ENCODE measurements at regions of chr22 and their contacts with region 1.

Region 1: GRCh38 chr22:23685205-23685784 is 5.5 kb upstream of the RGL4 start:
- DNase-seq: no peak
- ATAC-seq: no peak
- H3K4me3 Mint-ChIP-seq: no peak overlapping the region
- H3K27ac Mint-ChIP-seq: no peak overlapping the region
- H3K4me1 Mint-ChIP-seq: peaks cover 8% of the 10 kb centered on the region
- H3K27me3 Mint-ChIP-seq: no peaks in the 10 kb centered on the region

Region 2: GRCh38 chr22:23670378-23671290 is 14.7 kb before region 1 on chr22:
- POLR2A ChIA-PET with region 1: no interaction called
- DNase-seq: no peak
- ATAC-seq: no peak
- H3K4me3 Mint-ChIP-seq: no peak overlapping the region
- H3K27ac Mint-ChIP-seq: no peak overlapping the region
- H3K4me1 Mint-ChIP-seq: peaks cover 9% of the 10 kb centered on the region
- H3K27me3 Mint-ChIP-seq: no peaks in the 10 kb centered on the region

Region 3: GRCh38 chr22:23696326-23696851 is 11.1 kb after region 1 on chr22:
- POLR2A ChIA-PET with region 1: interaction called, 13 read pairs
- DNase-seq: peak; percentile 76
- ATAC-seq: peak; percentile 99
- H3K4me3 Mint-ChIP-seq: peak overlapping the region; percentile 98
- H3K27ac Mint-ChIP-seq: peak overlapping the region; percentile 100
- H3K4me1 Mint-ChIP-seq: peaks cover 39% of the 10 kb centered on the region
- H3K27me3 Mint-ChIP-seq: no peaks in the 10 kb centered on the region

Measured in activated naive CD8-positive, alpha-beta T cell treated with anti-CD3 and anti-CD28 coated beads, Interleukin-2, amount 10 ng/mL, durations not matched to agents 7 days and 5 days (primary cell).